ENCODE measurements at regions of chr11 and their contacts with region 1.

Region 1: DNA sequence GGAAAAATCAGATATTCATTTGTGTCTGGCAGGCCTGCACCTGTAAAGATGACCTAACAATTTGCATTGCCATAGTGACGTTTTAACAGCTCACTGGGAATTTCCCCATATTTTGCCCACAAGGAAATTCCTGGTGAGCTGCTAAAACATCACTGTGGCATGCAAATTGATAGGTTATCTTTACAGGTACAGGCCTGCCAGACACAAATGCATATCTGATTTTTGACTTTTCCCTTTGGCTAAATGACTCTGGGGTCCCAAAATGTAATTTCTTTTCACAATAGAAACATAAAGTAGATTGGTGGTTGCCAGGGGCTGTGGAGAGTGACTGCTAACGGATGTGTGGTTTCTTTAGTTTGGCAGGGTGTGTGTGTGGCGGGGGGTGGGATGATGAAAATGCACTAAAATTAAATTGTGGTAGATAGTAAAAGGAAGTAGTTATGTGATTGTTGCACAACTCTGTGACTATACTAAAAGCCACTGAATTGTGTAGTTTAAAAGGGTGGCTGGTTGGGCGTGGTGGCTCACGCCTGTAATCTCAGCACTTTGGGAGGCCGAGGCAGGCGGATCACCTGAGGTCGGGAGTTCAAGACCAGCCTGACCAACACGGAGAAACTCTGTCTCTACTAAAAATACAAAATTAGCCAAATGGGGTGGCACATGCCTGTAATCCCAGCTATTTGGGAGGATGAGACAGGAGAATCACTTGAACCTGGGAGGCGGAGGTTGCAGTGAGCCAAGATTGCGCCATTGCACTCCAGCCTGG is 18.5 kb upstream of the FEZ1 start:
- DNase-seq: peak; percentile 87
- H3K4me3 Mint-ChIP-seq: no peak overlapping the region
- H3K27ac Mint-ChIP-seq: peak overlapping the region; percentile 85
- H3K4me1 Mint-ChIP-seq: peaks cover 41% of the 10 kb centered on the region
- H3K27me3 Mint-ChIP-seq: no peaks in the 10 kb centered on the region

Region 2: DNA sequence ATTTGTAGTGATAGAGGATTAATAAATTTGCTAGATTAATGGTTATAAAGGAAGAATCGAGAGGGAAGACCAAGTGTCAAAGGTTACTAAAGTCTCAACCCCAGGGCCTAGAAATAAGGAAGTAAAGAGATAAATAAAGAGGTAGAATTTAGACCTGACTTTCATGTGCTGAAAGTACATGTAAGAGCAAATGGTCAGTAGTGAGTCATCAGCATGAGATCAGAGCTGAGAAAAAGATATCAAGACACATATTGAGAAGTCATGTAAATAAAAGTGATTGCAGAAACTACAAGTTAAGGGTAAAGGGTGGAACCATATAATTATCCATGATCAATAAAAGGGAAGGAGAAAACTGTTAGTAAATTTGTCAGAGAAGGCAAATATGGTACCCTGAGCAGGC is 1067.6 kb before region 1 on chr11:
- CTCF ChIA-PET with region 1: no interaction called
- intact Hi-C with region 1: no loop called
- DNase-seq: no peak
- H3K4me3 Mint-ChIP-seq: no peak overlapping the region
- H3K27ac Mint-ChIP-seq: no peak overlapping the region
- H3K4me1 Mint-ChIP-seq: no peaks in the 10 kb centered on the region
- H3K27me3 Mint-ChIP-seq: peaks cover 12% of the 10 kb centered on the region

Region 3: DNA sequence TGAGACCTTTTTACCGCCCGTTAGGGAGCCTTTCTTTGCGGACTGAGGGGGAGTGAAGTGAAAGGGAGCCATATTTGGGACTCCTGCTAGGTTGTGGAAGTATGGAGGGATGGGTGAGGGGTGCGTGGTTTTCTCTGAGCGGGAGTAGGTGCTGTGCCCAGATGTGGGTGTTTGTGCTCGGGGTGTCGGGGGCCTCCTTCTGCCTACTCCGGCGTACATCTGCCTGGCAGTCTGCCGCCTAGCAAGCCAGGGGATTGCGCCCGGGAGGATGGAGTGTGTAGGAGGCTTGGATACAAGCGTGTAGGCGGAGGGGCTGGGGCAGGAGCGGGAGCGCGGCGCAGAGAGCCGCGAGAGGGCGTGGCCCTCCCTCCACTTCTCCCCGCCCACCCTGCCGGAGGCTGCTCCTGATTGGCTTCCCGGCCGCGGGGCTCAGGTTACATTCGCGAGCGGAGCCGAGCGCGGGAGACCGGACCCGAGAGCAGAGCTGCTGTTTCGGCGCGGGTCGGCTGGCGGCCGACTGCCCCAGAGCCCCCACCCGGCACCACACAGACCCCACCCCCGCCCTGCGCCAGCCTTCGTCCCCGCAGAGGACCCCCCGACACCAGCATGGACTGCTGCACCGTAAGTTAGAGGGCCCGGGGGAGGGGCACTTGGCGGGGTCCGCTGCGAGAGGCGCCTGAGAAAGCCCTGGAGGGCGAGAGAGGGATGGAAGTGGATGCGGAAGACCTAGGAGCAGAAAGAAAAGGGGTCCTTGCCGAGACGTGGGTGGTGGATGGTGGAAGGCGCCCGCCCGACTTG is 774.8 kb before region 1 on chr11 and contains the start of gene NRGN:
- CTCF ChIA-PET with region 1: no interaction called
- intact Hi-C with region 1: loop called (anchors 10 kb)
- DNase-seq: peak; percentile 90
- H3K4me3 Mint-ChIP-seq: peak within 1 kb of the TSS; percentile 77
- H3K27ac Mint-ChIP-seq: no peak within 1 kb of the TSS
- H3K4me1 Mint-ChIP-seq: peaks cover 8% of the 10 kb centered on the region
- H3K27me3 Mint-ChIP-seq: peaks cover 2% of the 10 kb centered on the region
- total RNA-seq, gene NRGN: 10.3 to 10.8 TPM

Region 4: GRCh38 chr11:125494974-125495725 is 19.4 kb before region 1 on chr11:
- CTCF ChIA-PET with region 1: no interaction called
- intact Hi-C with region 1: loop called (anchors 1 kb)
- DNase-seq: no peak
- H3K4me3 Mint-ChIP-seq: peak overlapping the region; percentile 78
- H3K27ac Mint-ChIP-seq: no peak overlapping the region
- H3K4me1 Mint-ChIP-seq: peaks cover 19% of the 10 kb centered on the region
- H3K27me3 Mint-ChIP-seq: peaks cover 41% of the 10 kb centered on the region

Region 5: DNA sequence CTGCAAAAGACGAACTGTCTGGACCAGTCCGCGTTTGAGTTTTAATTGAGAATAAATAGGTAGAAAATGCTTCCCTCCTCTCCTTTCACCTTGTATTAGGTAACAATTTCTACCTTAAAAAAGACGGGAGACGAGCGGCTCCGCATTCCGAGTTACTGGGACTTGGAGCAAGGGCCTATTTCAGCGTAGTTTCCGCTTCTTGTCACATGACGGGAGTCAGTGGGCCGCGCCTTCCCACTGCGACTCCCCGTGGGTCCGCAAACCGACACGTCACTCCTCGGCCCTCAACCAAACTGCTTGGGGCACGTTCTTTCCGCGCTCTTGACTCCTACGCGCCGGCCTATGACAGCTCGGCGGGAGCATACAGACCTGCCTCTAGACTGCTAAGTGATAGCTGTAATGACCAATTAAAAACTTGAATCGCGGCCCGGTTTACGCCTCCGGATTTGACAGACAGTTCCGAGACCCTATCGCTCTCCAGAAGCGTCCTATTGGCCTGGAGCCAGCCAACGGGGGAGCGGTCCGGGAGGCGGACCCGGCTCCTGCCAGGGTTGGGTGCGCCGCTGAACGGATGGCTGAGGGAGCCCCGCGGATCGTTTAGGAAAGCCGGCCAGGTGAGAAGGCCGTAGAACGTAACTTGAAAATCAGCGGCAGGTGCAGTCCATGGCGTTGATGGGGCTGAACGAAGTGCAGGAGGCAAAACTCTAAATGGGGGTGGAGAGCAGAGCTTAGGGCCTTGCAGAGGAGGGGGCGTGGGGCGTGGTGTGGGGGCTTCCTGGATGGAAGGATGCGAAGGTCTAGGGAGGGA is 78.0 kb after region 1 on chr11 and contains the start of gene STT3A:
- CTCF ChIA-PET with region 1: no interaction called
- intact Hi-C with region 1: loop called (anchors 1 kb)
- DNase-seq: peak; percentile 99
- H3K4me3 Mint-ChIP-seq: peak within 1 kb of the TSS; percentile 100
- H3K27ac Mint-ChIP-seq: peak within 1 kb of the TSS; percentile 92
- H3K4me1 Mint-ChIP-seq: peaks cover 51% of the 10 kb centered on the region
- H3K27me3 Mint-ChIP-seq: no peaks in the 10 kb centered on the region
- total RNA-seq, gene STT3A: 111 to 113 TPM

Region 6: GRCh38 chr11:125603207-125603606 is 88.7 kb after region 1 on chr11:
- CTCF ChIA-PET with region 1: no interaction called
- intact Hi-C with region 1: no loop called
- DNase-seq: no peak
- H3K4me3 Mint-ChIP-seq: no peak overlapping the region
- H3K27ac Mint-ChIP-seq: no peak overlapping the region
- H3K4me1 Mint-ChIP-seq: peaks cover 2% of the 10 kb centered on the region
- H3K27me3 Mint-ChIP-seq: no peaks in the 10 kb centered on the region

Region 7: GRCh38 chr11:125649465-125650166 is 135.1 kb after region 1 on chr11:
- CTCF ChIA-PET with region 1: no interaction called
- intact Hi-C with region 1: no loop called
- DNase-seq: no peak
- H3K4me3 Mint-ChIP-seq: no peak overlapping the region
- H3K27ac Mint-ChIP-seq: no peak overlapping the region
- H3K4me1 Mint-ChIP-seq: peaks cover 4% of the 10 kb centered on the region
- H3K27me3 Mint-ChIP-seq: no peaks in the 10 kb centered on the region

Region 8: GRCh38 chr11:125887373-125888324 is 373.1 kb after region 1 on chr11 and contains the start of gene HYLS1:
- CTCF ChIA-PET with region 1: no interaction called
- intact Hi-C with region 1: loop called (anchors 1 kb)
- DNase-seq: peak; percentile 97
- H3K4me3 Mint-ChIP-seq: peak within 1 kb of the TSS; percentile 81
- H3K27ac Mint-ChIP-seq: peak within 1 kb of the TSS; percentile 88
- H3K4me1 Mint-ChIP-seq: peaks cover 35% of the 10 kb centered on the region
- H3K27me3 Mint-ChIP-seq: no peaks in the 10 kb centered on the region
- total RNA-seq, gene HYLS1: 10.2 to 11.7 TPM

Region 9: DNA sequence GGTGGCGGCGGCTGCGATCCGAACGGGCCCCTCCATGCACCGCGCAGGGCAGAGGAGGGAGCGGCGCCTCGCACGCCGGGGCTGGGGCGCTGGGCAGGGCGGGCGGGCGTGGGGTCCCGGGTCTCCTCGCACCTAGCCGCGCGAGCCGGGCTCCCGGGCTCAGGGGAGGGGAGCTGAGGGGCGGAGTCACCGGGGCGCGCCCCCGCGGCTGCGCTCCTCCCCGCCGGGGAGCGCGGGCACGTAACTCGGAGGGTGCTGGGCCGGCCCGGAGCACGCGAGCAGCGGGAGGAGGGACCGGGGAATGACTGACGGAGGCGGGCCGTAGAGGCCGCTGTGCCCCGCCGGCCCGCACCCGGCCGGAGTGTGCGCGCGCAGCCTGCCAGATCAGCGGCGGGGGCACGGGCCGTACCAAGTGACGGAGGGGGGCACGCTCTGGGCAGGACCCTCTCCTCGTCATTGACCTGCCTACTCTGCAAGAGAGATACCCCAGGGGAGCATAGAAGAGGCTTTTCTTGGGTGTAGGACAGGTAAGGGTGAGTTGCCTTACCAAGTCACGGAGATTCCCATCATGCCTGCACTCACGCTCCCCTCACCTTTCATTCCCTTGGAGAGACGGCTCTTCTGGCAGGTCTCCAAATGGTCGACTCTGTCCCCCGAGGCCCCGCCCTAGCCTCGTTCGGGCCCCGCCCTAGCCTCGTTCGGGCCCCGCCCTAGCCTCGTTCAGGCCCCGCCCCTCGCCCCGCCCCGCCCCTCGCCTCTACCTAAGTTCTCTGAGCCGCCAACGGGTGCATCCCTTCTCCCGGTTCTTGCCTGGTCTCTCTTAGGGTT is 548.4 kb after region 1 on chr11 and contains the start of gene CDON:
- CTCF ChIA-PET with region 1: no interaction called
- intact Hi-C with region 1: loop called (anchors 1 kb)
- DNase-seq: peak; percentile 92
- H3K4me3 Mint-ChIP-seq: peak within 1 kb of the TSS; percentile 77
- H3K27ac Mint-ChIP-seq: peak within 1 kb of the TSS; percentile 92
- H3K4me1 Mint-ChIP-seq: peaks cover 5% of the 10 kb centered on the region
- H3K27me3 Mint-ChIP-seq: peaks cover 17% of the 10 kb centered on the region
- total RNA-seq, gene CDON: 2.6 to 3.5 TPM

Measured in activated naive CD4-positive, alpha-beta T cell treated with anti-CD3 and anti-CD28 coated beads for 36 hours (primary cell).